GM12878 (cell line): ENCODE measurements at regions of chrX and their contacts with region 1.

Region 1: GRCh38 chrX:109384699-109385098 is 97.2 kb downstream of the GUCY2F start:
- DNase-seq: no peak
- ATAC-seq: peak; percentile 74
- H3K4me3 ChIP-seq: no peak overlapping the region
- H3K27ac ChIP-seq: no peak overlapping the region
- H3K4me1 ChIP-seq: no peaks in the 10 kb centered on the region
- H3K27me3 ChIP-seq: no peaks in the 10 kb centered on the region
- CTCF ChIP-seq: peak; percentile 37 to 47 (median 46); a peak in 4 of 6 replicates
- EP300 ChIP-seq: no peak
- POLR2A ChIP-seq: no peak
- RAD21 ChIP-seq: peak; percentile 76

Region 2: GRCh38 chrX:108224727-108225621 is 1159.7 kb before region 1 on chrX:
- CTCF ChIA-PET with region 1: interaction called, 28 read pairs
- POLR2A ChIA-PET with region 1: no interaction called
- RAD21 ChIA-PET with region 1: interaction called, 19 read pairs
- SMC1A ChIA-PET with region 1: interaction called, 7 read pairs
- in situ Hi-C with region 1: no loop called
- intact Hi-C with region 1: no loop called
- DNase-seq: peak; percentile 16
- ATAC-seq: peak; percentile 87
- H3K4me3 ChIP-seq: no peak overlapping the region
- H3K27ac ChIP-seq: no peak overlapping the region
- H3K4me1 ChIP-seq: no peaks in the 10 kb centered on the region
- H3K27me3 ChIP-seq: no peaks in the 10 kb centered on the region
- CTCF ChIP-seq: peak; percentile 59 to 67 (median 64)
- EP300 ChIP-seq: no peak
- POLR2A ChIP-seq: no peak
- RAD21 ChIP-seq: peak; percentile 76

Region 3: DNA sequence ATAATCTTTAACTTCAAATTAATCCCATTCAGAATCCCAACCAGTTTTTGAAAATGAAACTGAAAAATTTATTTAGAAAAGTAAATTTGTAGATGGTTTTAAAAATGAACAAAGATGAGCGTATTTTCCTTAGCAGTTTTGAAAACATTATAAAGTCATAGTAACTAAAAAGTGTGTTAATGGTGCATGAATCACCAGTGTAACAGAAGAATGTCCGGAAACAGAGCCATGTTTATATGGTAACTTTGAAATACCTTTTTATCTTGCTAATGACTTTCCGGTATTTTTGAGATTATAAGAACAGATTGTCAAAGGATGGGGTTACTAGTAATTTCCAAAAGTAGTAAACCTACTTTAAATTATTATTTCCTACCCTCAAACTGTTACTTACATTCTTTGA is 794.2 kb before region 1 on chrX:
- CTCF ChIA-PET with region 1: interaction called, 83 read pairs
- POLR2A ChIA-PET with region 1: no interaction called
- RAD21 ChIA-PET with region 1: interaction called, 40 read pairs
- SMC1A ChIA-PET with region 1: interaction called, 56 read pairs
- in situ Hi-C with region 1: loop called (anchors 10 kb)
- intact Hi-C with region 1: loop called (anchors 2 kb)
- DNase-seq: no peak
- ATAC-seq: no peak
- H3K4me3 ChIP-seq: no peak overlapping the region
- H3K27ac ChIP-seq: no peak overlapping the region
- H3K4me1 ChIP-seq: no peaks in the 10 kb centered on the region
- H3K27me3 ChIP-seq: no peaks in the 10 kb centered on the region
- CTCF ChIP-seq: no peak
- EP300 ChIP-seq: no peak
- POLR2A ChIP-seq: no peak
- RAD21 ChIP-seq: no peak

Region 4: GRCh38 chrX:109049902-109050301 is 334.8 kb before region 1 on chrX:
- CTCF ChIA-PET with region 1: interaction called, 51 read pairs
- POLR2A ChIA-PET with region 1: no interaction called
- RAD21 ChIA-PET with region 1: interaction called, 60 read pairs
- SMC1A ChIA-PET with region 1: interaction called, 57 read pairs
- in situ Hi-C with region 1: no loop called
- intact Hi-C with region 1: loop called (anchors 1 kb)
- DNase-seq: no peak
- ATAC-seq: peak; percentile 71
- H3K4me3 ChIP-seq: no peak overlapping the region
- H3K27ac ChIP-seq: no peak overlapping the region
- H3K4me1 ChIP-seq: no peaks in the 10 kb centered on the region
- H3K27me3 ChIP-seq: no peaks in the 10 kb centered on the region
- CTCF ChIP-seq: peak; percentile 26 to 44 (median 33); a peak in 5 of 6 replicates
- EP300 ChIP-seq: no peak
- POLR2A ChIP-seq: no peak
- RAD21 ChIP-seq: peak; percentile 53

Region 5: GRCh38 chrX:109270580-109271484 is 113.9 kb before region 1 on chrX:
- CTCF ChIA-PET with region 1: interaction called, 59 read pairs
- POLR2A ChIA-PET with region 1: no interaction called
- RAD21 ChIA-PET with region 1: interaction called, 60 read pairs
- SMC1A ChIA-PET with region 1: interaction called, 89 read pairs
- in situ Hi-C with region 1: no loop called
- intact Hi-C with region 1: loop called (anchors 2 kb)
- DNase-seq: peak; percentile 97
- ATAC-seq: peak; percentile 98
- H3K4me3 ChIP-seq: no peak overlapping the region
- H3K27ac ChIP-seq: peak overlapping the region; percentile 52; the same call in 1 of the 2 replicates
- H3K4me1 ChIP-seq: peaks cover 15% of the 10 kb centered on the region
- H3K27me3 ChIP-seq: no peaks in the 10 kb centered on the region
- CTCF ChIP-seq: no peak
- EP300 ChIP-seq: peak; percentile 89; a peak in 3 of 4 replicates
- POLR2A ChIP-seq: no peak
- RAD21 ChIP-seq: 0 out of 2 replicates have a peak, but pooled peaks have one; percentile 5

Region 6: DNA sequence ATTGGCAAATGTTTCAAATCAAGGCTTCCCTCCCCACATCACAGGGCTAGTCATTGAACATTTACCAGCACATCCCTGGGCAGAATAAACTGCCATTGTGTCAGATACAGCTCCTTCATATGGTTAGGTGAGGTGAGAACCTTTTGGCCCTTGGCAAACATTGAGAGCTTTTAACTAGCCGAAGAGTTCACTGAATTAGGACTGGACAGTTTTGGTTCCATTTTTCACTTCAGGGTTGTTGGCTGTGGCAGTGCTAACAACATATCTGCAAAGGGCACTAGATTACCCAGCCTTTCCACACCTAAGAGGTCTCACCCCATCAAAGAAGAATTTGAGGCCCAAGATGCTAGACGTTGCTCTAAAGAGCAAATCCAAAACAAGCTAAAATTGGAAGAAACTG is 83.5 kb before region 1 on chrX:
- CTCF ChIA-PET with region 1: interaction called, 4 read pairs
- POLR2A ChIA-PET with region 1: no interaction called
- RAD21 ChIA-PET with region 1: interaction called, 4 read pairs
- SMC1A ChIA-PET with region 1: interaction called, 10 read pairs
- in situ Hi-C with region 1: no loop called
- intact Hi-C with region 1: no loop called
- DNase-seq: no peak
- ATAC-seq: peak; percentile 31; the same call in 1 of the 3 replicates
- H3K4me3 ChIP-seq: no peak overlapping the region
- H3K27ac ChIP-seq: no peak overlapping the region
- H3K4me1 ChIP-seq: no peaks in the 10 kb centered on the region
- H3K27me3 ChIP-seq: no peaks in the 10 kb centered on the region
- CTCF ChIP-seq: no peak
- EP300 ChIP-seq: no peak
- POLR2A ChIP-seq: no peak
- RAD21 ChIP-seq: no peak

Region 7: DNA sequence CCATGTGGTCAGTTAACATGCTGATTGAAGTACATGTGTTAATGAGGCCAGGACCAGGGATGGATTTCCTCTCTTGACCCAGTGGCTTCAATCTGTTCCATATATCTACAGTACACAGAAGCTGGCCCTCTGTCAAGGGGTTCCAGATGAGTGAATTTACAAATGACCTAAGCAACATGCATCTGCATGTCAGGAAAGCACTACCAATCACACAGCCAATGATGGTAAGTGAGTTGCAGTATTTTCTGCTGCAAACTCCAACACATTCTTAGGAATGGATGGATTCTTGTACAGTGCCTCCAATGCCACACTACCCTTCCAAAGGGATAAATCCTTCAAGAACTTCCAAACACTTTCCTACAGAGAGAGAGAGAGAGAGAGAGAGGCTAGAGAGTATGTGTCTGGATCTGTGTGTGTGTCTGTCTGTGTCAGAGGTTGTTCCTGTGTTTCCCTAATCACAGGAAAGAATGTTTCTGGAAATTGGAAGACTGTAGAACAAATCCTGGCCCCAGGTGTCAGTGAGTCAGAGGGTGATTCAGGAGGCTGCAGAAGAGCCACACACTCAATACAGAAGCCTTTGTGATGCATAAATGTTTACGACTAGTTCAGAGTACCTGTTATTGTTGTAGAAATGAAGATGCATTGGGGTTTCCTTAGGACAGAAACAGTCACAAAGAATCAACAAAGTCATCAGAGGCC is 10.3 kb before region 1 on chrX:
- CTCF ChIA-PET with region 1: interaction called, 31 read pairs
- POLR2A ChIA-PET with region 1: no interaction called
- RAD21 ChIA-PET with region 1: interaction called, 7 read pairs
- SMC1A ChIA-PET with region 1: interaction called, 40 read pairs
- in situ Hi-C with region 1: no loop called
- intact Hi-C with region 1: no loop called
- DNase-seq: no peak
- ATAC-seq: no peak; the same call in 2 of the 3 replicates
- H3K4me3 ChIP-seq: no peak overlapping the region
- H3K27ac ChIP-seq: no peak overlapping the region
- H3K4me1 ChIP-seq: no peaks in the 10 kb centered on the region
- H3K27me3 ChIP-seq: no peaks in the 10 kb centered on the region
- CTCF ChIP-seq: no peak
- EP300 ChIP-seq: no peak
- POLR2A ChIP-seq: no peak
- RAD21 ChIP-seq: no peak

Region 8: DNA sequence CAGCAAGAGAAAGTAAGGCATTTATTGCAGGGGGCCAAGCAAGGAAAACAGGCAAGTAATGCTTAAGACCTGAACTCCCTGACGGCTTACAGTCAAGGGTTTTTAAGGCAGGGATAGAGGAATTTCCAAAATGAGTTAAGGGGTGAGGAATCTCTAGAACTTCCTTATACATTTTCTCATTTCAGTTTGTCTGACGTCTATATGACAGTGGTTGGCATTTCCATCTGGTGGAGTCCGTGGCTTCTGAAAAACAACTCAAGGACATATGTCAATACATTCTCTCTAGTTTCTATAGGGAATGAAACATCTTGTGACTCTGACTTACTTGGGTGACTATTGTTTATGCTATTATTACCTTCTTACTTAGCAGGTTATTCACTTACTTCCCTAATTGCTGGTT is 116.5 kb after region 1 on chrX:
- CTCF ChIA-PET with region 1: no interaction called
- POLR2A ChIA-PET with region 1: no interaction called
- RAD21 ChIA-PET with region 1: no interaction called
- SMC1A ChIA-PET with region 1: no interaction called
- in situ Hi-C with region 1: no loop called
- intact Hi-C with region 1: no loop called
- DNase-seq: no peak
- ATAC-seq: no peak
- H3K4me3 ChIP-seq: no peak overlapping the region
- H3K27ac ChIP-seq: no peak overlapping the region
- H3K4me1 ChIP-seq: no peaks in the 10 kb centered on the region
- H3K27me3 ChIP-seq: no peaks in the 10 kb centered on the region
- CTCF ChIP-seq: no peak
- EP300 ChIP-seq: no peak
- POLR2A ChIP-seq: no peak
- RAD21 ChIP-seq: no peak